H1 (cell line): ENCODE measurements at regions of chr1 and their contacts with region 1.

Region 1: GRCh38 chr1:206663832-206664652 is 20.7 kb upstream of the MAPKAPK2 start:
- DNase-seq: peak in 1 of 2 experiments; percentile 92
- H3K4me3 ChIP-seq: peak overlapping the region; percentile 11 to 54 (median 25); a peak in 7 of 8 replicates
- H3K27ac ChIP-seq: no peak overlapping the region
- H3K4me1 ChIP-seq: peaks cover 0 to 5% (median 1%) of the 10 kb centered on the region in 4 experiments; a peak in 4 of 7 replicates
- H3K27me3 ChIP-seq: peaks cover 0 to 10% (median 3%) of the 10 kb centered on the region in 4 experiments; a peak in 5 of 7 replicates
- CTCF ChIP-seq: peak; percentile 72 to 91 (median 87)
- EP300 ChIP-seq: no peak
- POLR2A ChIP-seq: no peak
- RAD21 ChIP-seq: peak; percentile 88 to 94

Region 2: DNA sequence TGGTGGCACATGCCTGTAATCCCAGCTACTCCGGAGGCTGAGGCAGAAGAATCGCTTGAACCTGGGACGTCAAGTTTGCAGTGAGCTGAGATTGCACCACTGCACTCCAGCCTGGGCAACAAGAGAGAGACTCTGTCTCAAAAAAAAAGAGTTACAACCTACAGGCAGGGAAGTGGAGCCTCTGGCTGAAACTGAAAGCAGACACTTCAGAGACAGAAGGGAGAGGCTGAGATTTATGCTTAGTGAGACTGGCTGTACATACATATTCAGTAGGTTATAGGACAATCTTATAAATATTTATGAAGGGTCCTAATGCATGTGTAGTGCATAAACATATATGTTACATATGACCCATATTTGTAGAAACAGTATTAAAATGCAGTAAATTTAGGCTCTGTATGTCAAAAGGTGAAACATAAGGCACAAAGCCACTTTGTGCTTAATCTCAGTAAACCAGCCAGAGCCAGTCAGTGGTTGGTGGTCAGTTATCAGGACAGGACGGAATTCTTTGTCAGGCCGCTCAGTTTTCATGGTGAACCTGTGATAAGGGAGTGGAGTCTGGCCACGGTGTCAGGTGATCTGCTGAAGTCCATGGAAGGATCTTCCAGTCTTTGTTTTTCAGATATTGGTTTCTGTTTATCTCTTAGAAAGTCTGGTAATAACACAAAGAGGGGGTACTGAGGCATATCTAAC is 597.4 kb before region 1 on chr1:
- CTCF ChIA-PET with region 1: no interaction called
- POLR2A ChIA-PET with region 1: no interaction called
- DNase-seq: peak in 1 of 2 experiments; percentile 16
- H3K4me3 ChIP-seq: no peak overlapping the region
- H3K27ac ChIP-seq: no peak overlapping the region
- H3K4me1 ChIP-seq: no peaks in the 10 kb centered on the region
- H3K27me3 ChIP-seq: no peaks in the 10 kb centered on the region
- CTCF ChIP-seq: no peak
- EP300 ChIP-seq: no peak
- POLR2A ChIP-seq: no peak
- RAD21 ChIP-seq: no peak

Region 3: GRCh38 chr1:206600527-206600926 is 63.5 kb before region 1 on chr1:
- CTCF ChIA-PET with region 1: interaction called, 10 read pairs
- POLR2A ChIA-PET with region 1: no interaction called
- DNase-seq: no peak
- H3K4me3 ChIP-seq: no peak overlapping the region
- H3K27ac ChIP-seq: no peak overlapping the region
- H3K4me1 ChIP-seq: no peaks in the 10 kb centered on the region
- H3K27me3 ChIP-seq: no peaks in the 10 kb centered on the region
- CTCF ChIP-seq: no peak
- EP300 ChIP-seq: no peak
- POLR2A ChIP-seq: no peak
- RAD21 ChIP-seq: no peak

Region 4: DNA sequence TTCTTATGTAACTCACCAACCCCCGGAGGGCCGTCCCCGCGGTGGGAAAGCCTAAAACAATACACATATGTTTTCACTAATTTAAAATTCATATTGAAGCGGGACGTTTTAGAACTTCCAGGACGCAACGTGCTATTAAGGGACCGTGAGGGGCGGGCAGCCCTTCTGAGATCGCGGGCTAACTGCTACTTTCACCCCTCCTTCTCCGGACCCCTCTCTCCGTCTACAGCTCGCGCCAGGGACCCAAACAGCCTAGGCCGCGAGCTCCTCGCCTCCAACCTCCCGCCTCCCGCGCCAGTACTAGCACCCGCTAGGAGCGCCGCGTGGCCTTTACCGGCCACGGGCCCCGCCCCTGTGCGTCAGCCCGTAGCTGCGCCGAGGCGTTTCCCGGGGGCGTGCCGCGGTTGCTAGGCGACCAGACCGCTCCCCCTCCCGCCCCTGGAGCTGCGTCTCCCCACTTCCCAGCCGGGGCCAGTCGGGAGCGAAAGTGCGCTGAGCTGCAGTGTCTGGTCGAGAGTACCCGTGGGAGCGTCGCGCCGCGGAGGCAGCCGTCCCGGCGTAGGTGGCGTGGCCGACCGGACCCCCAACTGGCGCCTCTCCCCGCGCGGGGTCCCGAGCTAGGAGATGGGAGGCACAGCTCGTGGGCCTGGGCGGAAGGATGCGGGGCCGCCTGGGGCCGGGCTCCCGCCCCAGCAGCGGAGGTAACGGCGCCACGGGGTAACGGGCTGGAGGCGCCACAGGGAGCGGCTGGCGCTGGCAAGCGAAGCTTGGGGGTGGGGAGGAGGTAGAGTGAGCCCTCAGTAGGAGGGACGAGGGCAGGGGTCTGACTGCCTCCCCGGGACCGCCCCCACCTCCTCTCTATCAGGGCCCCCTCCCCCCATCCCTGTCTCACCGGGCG is 28.7 kb before region 1 on chr1 and contains the start of gene DYRK3:
- CTCF ChIA-PET with region 1: interaction called, 666 read pairs
- POLR2A ChIA-PET with region 1: interaction called, 13 read pairs
- DNase-seq: peak; percentile 63 to 97
- H3K4me3 ChIP-seq: peak within 1 kb of the TSS; percentile 66 to 88 (median 79)
- H3K27ac ChIP-seq: no peak within 1 kb of the TSS
- H3K4me1 ChIP-seq: peaks cover 0 to 10% (median 4%) of the 10 kb centered on the region in 4 experiments; a peak in 4 of 7 replicates
- H3K27me3 ChIP-seq: peaks cover 0 to 4% (median 0%) of the 10 kb centered on the region in 4 experiments; a peak in 2 of 7 replicates
- CTCF ChIP-seq: no peak
- EP300 ChIP-seq: no peak
- POLR2A ChIP-seq: peak in 1 of 2 experiments; percentile 68; a peak in 1 of 3 replicates
- RAD21 ChIP-seq: no peak
- total RNA-seq, gene DYRK3: 7.7 and 8.5 TPM in 2 replicates

Region 5: GRCh38 chr1:206693029-206693428 is 29.0 kb after region 1 on chr1:
- CTCF ChIA-PET with region 1: interaction called, 48 read pairs
- POLR2A ChIA-PET with region 1: no interaction called
- DNase-seq: no peak
- H3K4me3 ChIP-seq: no peak overlapping the region
- H3K27ac ChIP-seq: no peak overlapping the region
- H3K4me1 ChIP-seq: peaks cover 8 to 27% (median 23%) of the 10 kb centered on the region in 4 experiments
- H3K27me3 ChIP-seq: no peaks in the 10 kb centered on the region; a peak in 2 of 7 replicates
- CTCF ChIP-seq: no peak
- EP300 ChIP-seq: no peak
- POLR2A ChIP-seq: no peak
- RAD21 ChIP-seq: no peak

Region 6: DNA sequence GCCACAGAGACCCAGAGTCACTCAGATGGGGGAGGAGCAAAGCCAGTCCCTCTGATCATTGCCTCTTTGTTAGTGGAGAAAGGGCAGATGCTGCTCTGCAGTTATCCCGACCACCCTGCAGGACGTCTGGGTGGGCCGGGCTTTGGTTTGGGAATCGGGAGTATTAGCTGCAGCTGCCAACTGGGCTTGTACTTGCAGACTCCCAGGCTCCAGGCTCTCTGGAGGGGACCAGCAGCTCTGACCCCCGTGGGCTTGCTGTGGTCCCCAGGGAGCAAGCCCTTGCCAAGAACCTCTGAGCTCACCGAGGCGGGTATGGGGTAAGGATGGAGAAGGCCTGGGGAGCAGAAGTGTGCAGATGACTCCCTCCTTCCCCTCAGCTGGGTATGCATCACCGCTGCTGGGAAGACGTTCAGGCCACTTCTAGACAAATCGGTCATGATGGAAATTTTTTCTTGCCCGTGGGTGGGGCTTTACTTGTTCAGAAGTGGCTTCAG is 42.3 kb after region 1 on chr1:
- CTCF ChIA-PET with region 1: interaction called, 15 read pairs
- POLR2A ChIA-PET with region 1: interaction called, 5 read pairs
- DNase-seq: no peak
- H3K4me3 ChIP-seq: no peak overlapping the region
- H3K27ac ChIP-seq: no peak overlapping the region
- H3K4me1 ChIP-seq: peaks cover 22 to 49% (median 32%) of the 10 kb centered on the region in 4 experiments
- H3K27me3 ChIP-seq: no peaks in the 10 kb centered on the region
- CTCF ChIP-seq: no peak
- EP300 ChIP-seq: no peak
- POLR2A ChIP-seq: no peak
- RAD21 ChIP-seq: no peak